ENCODE measurements at regions of chr19 and their contacts with region 1.

Region 1: GRCh38 chr19:43463381-43464136 is 1.8 kb downstream of the LYPD3 start:
- DNase-seq: peak; percentile 99 to 100 (median 99)
- ATAC-seq: peak; percentile 79
- H3K4me3 ChIP-seq: peak overlapping the region; percentile 75 to 89
- H3K4me3 Mint-ChIP-seq: peak overlapping the region; percentile 93
- H3K27ac ChIP-seq: peak overlapping the region; percentile 85 to 91
- H3K27ac Mint-ChIP-seq: peak overlapping the region; percentile 98
- H3K4me1 ChIP-seq: peaks cover 29% of the 10 kb centered on the region
- H3K4me1 Mint-ChIP-seq: peaks cover 53% of the 10 kb centered on the region
- H3K27me3 ChIP-seq: no peaks in the 10 kb centered on the region
- H3K27me3 Mint-ChIP-seq: no peaks in the 10 kb centered on the region
- CTCF ChIP-seq: no peak

Region 2: GRCh38 chr19:43362179-43362578 is 101.4 kb before region 1 on chr19:
- CTCF ChIA-PET with region 1: no interaction called
- POLR2A ChIA-PET with region 1: no interaction called
- intact Hi-C with region 1: no loop called
- DNase-seq: no peak
- ATAC-seq: no peak
- H3K4me3 ChIP-seq: no peak overlapping the region
- H3K4me3 Mint-ChIP-seq: no peak overlapping the region
- H3K27ac ChIP-seq: no peak overlapping the region
- H3K27ac Mint-ChIP-seq: no peak overlapping the region
- H3K4me1 ChIP-seq: no peaks in the 10 kb centered on the region
- H3K4me1 Mint-ChIP-seq: no peaks in the 10 kb centered on the region
- H3K27me3 ChIP-seq: no peaks in the 10 kb centered on the region
- H3K27me3 Mint-ChIP-seq: peaks cover 3% of the 10 kb centered on the region
- CTCF ChIP-seq: no peak

Region 3: GRCh38 chr19:43438291-43439096 is 25.1 kb before region 1 on chr19:
- CTCF ChIA-PET with region 1: interaction called, 10 read pairs
- POLR2A ChIA-PET with region 1: interaction called, 25 read pairs
- intact Hi-C with region 1: loop called (anchors 1 kb)
- DNase-seq: peak in 3 of 9 experiments; percentile 16 to 33 (median 22)
- ATAC-seq: peak; percentile 25
- H3K4me3 ChIP-seq: peak overlapping the region in 1 of 2 experiments; percentile 10
- H3K4me3 Mint-ChIP-seq: peak overlapping the region; percentile 44
- H3K27ac ChIP-seq: peak overlapping the region; percentile 64 to 88
- H3K27ac Mint-ChIP-seq: peak overlapping the region; percentile 96
- H3K4me1 ChIP-seq: peaks cover 33% of the 10 kb centered on the region
- H3K4me1 Mint-ChIP-seq: peaks cover 56% of the 10 kb centered on the region
- H3K27me3 ChIP-seq: no peaks in the 10 kb centered on the region
- H3K27me3 Mint-ChIP-seq: no peaks in the 10 kb centered on the region
- CTCF ChIP-seq: no peak

Region 4: DNA sequence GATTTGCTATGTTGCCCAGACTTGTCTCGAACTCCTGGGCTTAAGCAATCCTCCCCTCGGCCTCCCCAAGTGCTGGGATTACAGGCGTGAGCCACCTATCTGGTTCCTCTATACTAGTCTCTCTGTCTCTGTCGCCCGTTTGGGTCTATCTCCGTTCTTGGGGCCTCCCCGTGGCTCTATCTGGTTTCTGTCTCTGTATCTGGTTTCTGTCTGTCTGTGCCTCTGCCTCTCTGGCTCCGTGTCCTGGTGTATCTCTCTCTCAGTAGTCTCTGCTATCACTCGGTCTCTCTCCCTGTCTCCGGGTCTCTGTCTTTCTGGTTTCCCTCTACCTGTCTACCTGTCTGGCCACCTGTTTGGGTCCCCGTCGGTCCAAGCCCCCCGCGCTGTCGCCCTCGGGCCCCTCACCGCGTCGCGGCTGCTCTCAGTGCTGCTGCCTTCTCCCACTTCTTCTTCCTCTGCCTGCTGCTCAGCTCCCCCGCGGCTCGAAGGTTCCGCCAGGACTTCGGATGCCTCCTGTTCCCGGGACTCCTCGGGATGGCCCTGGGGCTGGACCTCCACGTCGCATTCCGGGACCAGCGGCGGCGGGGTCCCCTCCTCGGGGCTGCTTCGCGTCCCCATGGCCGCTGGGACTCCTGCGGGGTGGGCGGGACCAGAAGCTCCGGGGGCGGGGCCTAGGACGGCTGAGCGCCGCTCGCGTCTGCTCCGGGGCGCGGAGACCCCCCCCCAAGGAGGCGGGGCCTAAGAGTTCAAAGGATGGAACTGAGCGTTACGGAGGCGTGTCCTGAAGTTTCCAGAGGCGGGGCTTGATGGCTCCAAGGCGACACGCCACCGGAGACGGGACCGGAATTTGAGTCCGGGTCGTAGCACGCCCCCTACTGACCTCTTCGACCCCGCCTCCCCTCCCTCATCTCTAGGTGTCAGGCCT is 40.2 kb after region 1 on chr19:
- CTCF ChIA-PET with region 1: interaction called, 3 read pairs
- POLR2A ChIA-PET with region 1: interaction called, 44 read pairs
- intact Hi-C with region 1: loop called (anchors 1 kb)
- DNase-seq: peak; percentile 98 to 100 (median 99)
- ATAC-seq: peak; percentile 95
- H3K4me3 ChIP-seq: peak overlapping the region; percentile 97
- H3K4me3 Mint-ChIP-seq: peak overlapping the region; percentile 97
- H3K27ac ChIP-seq: peak overlapping the region; percentile 84 to 86
- H3K27ac Mint-ChIP-seq: peak overlapping the region; percentile 96
- H3K4me1 ChIP-seq: peaks cover 19% of the 10 kb centered on the region
- H3K4me1 Mint-ChIP-seq: peaks cover 34% of the 10 kb centered on the region
- H3K27me3 ChIP-seq: no peaks in the 10 kb centered on the region
- H3K27me3 Mint-ChIP-seq: no peaks in the 10 kb centered on the region
- CTCF ChIP-seq: no peak

Region 5: GRCh38 chr19:43532962-43533545 is 69.5 kb after region 1 on chr19 and contains the start of gene ZNF575:
- CTCF ChIA-PET with region 1: no interaction called
- POLR2A ChIA-PET with region 1: interaction called, 22 read pairs
- intact Hi-C with region 1: loop called (anchors 1 kb)
- DNase-seq: peak; percentile 63 to 94 (median 87)
- ATAC-seq: peak; percentile 43
- H3K4me3 ChIP-seq: peak within 1 kb of the TSS; percentile 65 to 79
- H3K4me3 Mint-ChIP-seq: peak within 1 kb of the TSS; percentile 98
- H3K27ac ChIP-seq: peak within 1 kb of the TSS; percentile 55 to 76
- H3K27ac Mint-ChIP-seq: peak within 1 kb of the TSS; percentile 97
- H3K4me1 ChIP-seq: peaks cover 7% of the 10 kb centered on the region
- H3K4me1 Mint-ChIP-seq: peaks cover 19% of the 10 kb centered on the region
- H3K27me3 ChIP-seq: no peaks in the 10 kb centered on the region
- H3K27me3 Mint-ChIP-seq: no peaks in the 10 kb centered on the region
- CTCF ChIP-seq: no peak
- total RNA-seq, gene ZNF575: 2.4 to 3.4 TPM